ENCODE measurements at regions of chr2 and their contacts with region 1.

Region 1: DNA sequence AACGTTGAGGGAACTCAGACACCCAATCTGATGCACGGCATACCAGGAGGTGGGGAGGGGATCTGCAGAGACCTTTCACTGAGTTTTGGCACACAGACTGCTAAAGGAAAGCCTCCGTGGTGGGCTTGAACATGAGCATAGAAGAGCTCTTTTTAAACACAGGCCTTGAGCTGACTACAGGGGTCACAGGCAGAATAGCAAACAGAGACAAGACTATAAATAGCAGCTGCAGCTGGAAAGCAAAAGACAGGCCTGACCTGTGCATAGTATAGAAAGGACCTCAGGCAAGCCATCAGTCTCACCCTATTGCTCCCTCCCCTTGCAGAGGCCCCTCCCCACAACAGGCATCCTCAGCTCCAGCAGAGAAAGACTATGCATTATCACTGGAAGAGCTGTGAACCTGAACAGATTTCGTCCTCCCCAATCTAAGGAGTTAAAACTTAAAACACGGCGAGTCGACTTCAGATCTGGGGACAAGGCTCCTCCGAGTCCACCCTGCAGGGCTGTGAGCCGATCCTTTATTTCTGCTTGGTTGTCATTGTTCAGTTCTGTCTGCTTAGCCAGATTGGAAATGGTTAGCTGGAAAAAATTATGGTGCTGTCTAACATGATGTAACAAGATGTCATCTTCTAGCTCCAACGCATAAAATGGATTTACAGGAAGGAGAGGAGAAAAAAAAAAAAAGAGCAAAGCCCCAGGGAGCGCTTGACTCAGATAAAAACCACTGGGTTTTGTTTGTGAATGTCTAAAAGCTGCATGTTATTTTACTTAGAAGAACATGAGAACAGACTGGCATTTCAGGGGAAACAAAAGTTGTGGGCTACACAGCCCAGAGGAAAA is 25.2 kb upstream of the LCLAT1 start:
- DNase-seq: peak; percentile 37
- H3K4me3 Mint-ChIP-seq: peak overlapping the region; percentile 74
- H3K27ac Mint-ChIP-seq: peak overlapping the region; percentile 94
- H3K4me1 Mint-ChIP-seq: peaks cover 54% of the 10 kb centered on the region
- H3K27me3 Mint-ChIP-seq: no peaks in the 10 kb centered on the region

Region 2: DNA sequence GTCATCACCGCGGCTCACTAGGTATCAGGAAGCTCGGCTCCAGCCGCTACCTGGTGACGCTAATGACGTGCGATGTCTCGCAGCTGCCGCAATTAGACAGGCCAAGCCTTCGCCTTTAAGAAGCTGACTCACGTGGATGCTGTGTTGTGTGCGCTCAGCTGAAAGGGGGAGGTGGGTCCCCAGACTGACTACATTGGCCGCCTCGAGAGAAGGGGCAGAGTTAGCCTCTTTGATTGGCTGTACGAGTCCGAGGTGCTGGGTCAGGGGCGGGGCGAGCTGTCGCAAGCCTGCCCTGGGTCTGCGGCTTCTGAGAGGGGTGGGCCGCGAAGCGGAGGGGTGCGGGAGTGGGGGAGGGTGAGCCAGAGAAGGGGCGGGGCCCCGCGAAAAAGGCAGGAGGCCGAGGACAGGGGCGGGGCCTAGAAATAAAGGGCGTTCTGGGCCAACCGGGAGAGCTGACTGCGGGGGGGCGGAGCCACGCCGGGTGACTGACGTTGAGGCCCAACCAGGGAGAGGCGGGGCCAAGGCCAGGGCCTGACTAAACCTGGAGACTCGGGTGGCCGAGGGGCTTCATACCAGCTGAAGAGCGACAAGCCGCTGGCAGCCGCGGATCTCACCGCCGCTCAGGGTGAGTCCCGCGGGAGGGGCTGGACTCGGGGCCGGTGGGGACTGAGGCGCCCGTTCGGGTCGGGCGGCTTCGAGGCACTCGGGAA is 275.2 kb before region 1 on chr2 and contains the start of gene YPEL5:
- CTCF ChIA-PET with region 1: no interaction called
- intact Hi-C with region 1: loop called (anchors 1 kb)
- DNase-seq: peak; percentile 99
- H3K4me3 Mint-ChIP-seq: peak within 1 kb of the TSS; percentile 84
- H3K27ac Mint-ChIP-seq: peak within 1 kb of the TSS; percentile 95
- H3K4me1 Mint-ChIP-seq: peaks cover 56% of the 10 kb centered on the region
- H3K27me3 Mint-ChIP-seq: no peaks in the 10 kb centered on the region
- total RNA-seq, gene YPEL5: 28.4 to 33.3 TPM

Region 3: GRCh38 chr2:30231212-30231995 is 190.4 kb before region 1 on chr2 and contains the start of gene LBH:
- CTCF ChIA-PET with region 1: interaction called, 7 read pairs
- intact Hi-C with region 1: loop called (anchors 1 kb)
- DNase-seq: peak; percentile 90
- H3K4me3 Mint-ChIP-seq: peak within 1 kb of the TSS; percentile 83
- H3K27ac Mint-ChIP-seq: peak within 1 kb of the TSS; percentile 74
- H3K4me1 Mint-ChIP-seq: peaks cover 56% of the 10 kb centered on the region
- H3K27me3 Mint-ChIP-seq: peaks cover 3% of the 10 kb centered on the region
- total RNA-seq, gene LBH: 71.4 to 75.3 TPM

Region 4: GRCh38 chr2:30266051-30266621 is 155.7 kb before region 1 on chr2:
- CTCF ChIA-PET with region 1: interaction called, 3 read pairs
- intact Hi-C with region 1: loop called (anchors 1 kb)
- DNase-seq: peak; percentile 73
- H3K4me3 Mint-ChIP-seq: peak overlapping the region; percentile 79
- H3K27ac Mint-ChIP-seq: peak overlapping the region; percentile 89
- H3K4me1 Mint-ChIP-seq: peaks cover 81% of the 10 kb centered on the region
- H3K27me3 Mint-ChIP-seq: no peaks in the 10 kb centered on the region

Region 5: DNA sequence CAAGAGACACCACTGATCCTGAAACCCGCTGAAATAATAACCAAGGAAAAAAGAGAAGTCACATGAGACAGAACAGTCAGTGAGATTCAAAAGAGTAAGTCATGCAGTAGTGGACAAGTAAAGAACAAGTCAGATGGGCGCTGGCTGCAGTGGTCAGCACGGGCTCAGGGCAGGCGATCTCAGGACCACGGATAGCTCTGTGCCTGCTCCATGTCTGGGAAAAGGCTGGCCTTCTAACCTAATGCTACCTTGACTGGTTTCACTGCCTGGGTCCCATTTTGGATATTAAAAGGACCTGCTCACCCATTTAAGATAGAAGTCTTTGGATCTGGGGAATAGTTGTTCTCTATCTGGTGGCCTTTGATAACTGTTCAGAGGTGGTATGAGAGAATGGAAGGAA is 36.5 kb before region 1 on chr2:
- CTCF ChIA-PET with region 1: no interaction called
- intact Hi-C with region 1: no loop called
- DNase-seq: no peak
- H3K4me3 Mint-ChIP-seq: no peak overlapping the region
- H3K27ac Mint-ChIP-seq: no peak overlapping the region
- H3K4me1 Mint-ChIP-seq: peaks cover 9% of the 10 kb centered on the region
- H3K27me3 Mint-ChIP-seq: no peaks in the 10 kb centered on the region

Region 6: DNA sequence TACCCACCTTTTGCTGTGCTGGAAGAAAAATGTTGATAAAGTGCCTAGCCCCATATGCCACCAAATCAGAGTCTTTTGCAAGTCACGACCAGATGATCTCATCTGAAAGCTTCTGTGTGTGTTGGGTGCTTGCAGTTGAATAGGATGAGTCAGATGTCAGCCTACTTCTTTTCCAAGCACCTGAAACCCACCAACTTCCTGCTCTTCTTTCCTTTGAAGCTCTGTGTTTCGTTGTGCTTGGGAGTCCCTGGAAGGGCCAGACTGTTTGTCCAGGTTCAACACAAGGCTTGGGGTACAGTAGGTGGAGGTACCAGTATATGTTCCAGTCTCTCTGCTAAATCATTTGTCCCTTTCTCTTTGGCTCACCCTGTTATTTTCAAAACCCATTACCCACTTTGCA is 11.6 kb before region 1 on chr2:
- CTCF ChIA-PET with region 1: interaction called, 7 read pairs
- intact Hi-C with region 1: loop called (anchors 1 kb)
- DNase-seq: peak; percentile 58
- H3K4me3 Mint-ChIP-seq: no peak overlapping the region
- H3K27ac Mint-ChIP-seq: peak overlapping the region; percentile 73
- H3K4me1 Mint-ChIP-seq: peaks cover 45% of the 10 kb centered on the region
- H3K27me3 Mint-ChIP-seq: no peaks in the 10 kb centered on the region

Region 7: DNA sequence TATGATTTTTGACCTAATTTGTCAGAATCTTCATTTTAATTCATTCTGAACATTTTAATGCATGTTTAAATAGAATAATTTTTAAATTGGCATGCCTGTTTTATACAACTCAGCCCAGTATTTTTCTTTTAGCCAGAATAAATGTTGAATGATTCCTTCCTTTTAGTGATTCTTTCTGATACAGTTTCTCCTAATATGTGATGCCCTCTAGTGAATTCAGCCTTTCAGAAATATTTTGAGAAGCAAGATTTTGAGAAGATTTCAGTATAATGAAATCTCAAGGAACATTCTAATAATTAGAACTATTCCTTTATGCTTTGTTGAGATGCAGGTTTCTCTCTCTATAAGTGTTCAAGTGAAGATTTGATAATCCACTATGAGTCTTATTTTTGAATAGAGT is 53.7 kb after region 1 on chr2:
- CTCF ChIA-PET with region 1: interaction called, 3 read pairs
- intact Hi-C with region 1: loop called (anchors 1 kb)
- DNase-seq: no peak
- H3K4me3 Mint-ChIP-seq: no peak overlapping the region
- H3K27ac Mint-ChIP-seq: no peak overlapping the region
- H3K4me1 Mint-ChIP-seq: peaks cover 33% of the 10 kb centered on the region
- H3K27me3 Mint-ChIP-seq: no peaks in the 10 kb centered on the region

Region 8: GRCh38 chr2:30561349-30561748 is 139.5 kb after region 1 on chr2:
- CTCF ChIA-PET with region 1: no interaction called
- intact Hi-C with region 1: no loop called
- DNase-seq: no peak
- H3K4me3 Mint-ChIP-seq: no peak overlapping the region
- H3K27ac Mint-ChIP-seq: peak overlapping the region; percentile 13
- H3K4me1 Mint-ChIP-seq: peaks cover 3% of the 10 kb centered on the region
- H3K27me3 Mint-ChIP-seq: no peaks in the 10 kb centered on the region

Measured in activated naive CD4-positive, alpha-beta T cell treated with anti-CD3 and anti-CD28 coated beads for 36 hours (primary cell).